CD8-positive, alpha-beta T cell (primary cell): ENCODE measurements at regions of chr10 and their contacts with region 1.

Region 1: GRCh38 chr10:23438550-23439441 is at the start of gene OTUD1:
- DNase-seq: peak; percentile 87 to 96 (median 93)
- ATAC-seq: peak; percentile 89
- H3K4me3 ChIP-seq: peak within 1 kb of the TSS; percentile 68 to 77
- H3K4me3 Mint-ChIP-seq: peak within 1 kb of the TSS; percentile 93
- H3K27ac ChIP-seq: peak within 1 kb of the TSS; percentile 82 to 90
- H3K27ac Mint-ChIP-seq: peak within 1 kb of the TSS; percentile 91
- H3K4me1 ChIP-seq: peaks cover 32% of the 10 kb centered on the region
- H3K4me1 Mint-ChIP-seq: peaks cover 37% of the 10 kb centered on the region
- H3K27me3 ChIP-seq: no peaks in the 10 kb centered on the region
- H3K27me3 Mint-ChIP-seq: no peaks in the 10 kb centered on the region
- CTCF ChIP-seq: no peak
- total RNA-seq, gene OTUD1: 78.9 to 81.3 TPM

Region 2: GRCh38 chr10:21525367-21526183 is 1913.2 kb before region 1 on chr10 and contains the start of gene SKIDA1:
- CTCF ChIA-PET with region 1: no interaction called
- POLR2A ChIA-PET with region 1: no interaction called
- intact Hi-C with region 1: loop called (anchors 5 to 10 kb)
- DNase-seq: peak; percentile 13 to 77 (median 53)
- ATAC-seq: peak; percentile 73
- H3K4me3 ChIP-seq: peak within 1 kb of the TSS; percentile 70 to 75
- H3K4me3 Mint-ChIP-seq: peak within 1 kb of the TSS; percentile 87
- H3K27ac ChIP-seq: peak within 1 kb of the TSS; percentile 31 to 70
- H3K27ac Mint-ChIP-seq: peak within 1 kb of the TSS; percentile 92
- H3K4me1 ChIP-seq: peaks cover 15% of the 10 kb centered on the region
- H3K4me1 Mint-ChIP-seq: peaks cover 25% of the 10 kb centered on the region
- H3K27me3 ChIP-seq: peaks cover 17 to 28% of the 10 kb centered on the region in 2 experiments
- H3K27me3 Mint-ChIP-seq: peaks cover 39% of the 10 kb centered on the region
- CTCF ChIP-seq: no peak
- total RNA-seq, gene SKIDA1: not detected

Region 3: DNA sequence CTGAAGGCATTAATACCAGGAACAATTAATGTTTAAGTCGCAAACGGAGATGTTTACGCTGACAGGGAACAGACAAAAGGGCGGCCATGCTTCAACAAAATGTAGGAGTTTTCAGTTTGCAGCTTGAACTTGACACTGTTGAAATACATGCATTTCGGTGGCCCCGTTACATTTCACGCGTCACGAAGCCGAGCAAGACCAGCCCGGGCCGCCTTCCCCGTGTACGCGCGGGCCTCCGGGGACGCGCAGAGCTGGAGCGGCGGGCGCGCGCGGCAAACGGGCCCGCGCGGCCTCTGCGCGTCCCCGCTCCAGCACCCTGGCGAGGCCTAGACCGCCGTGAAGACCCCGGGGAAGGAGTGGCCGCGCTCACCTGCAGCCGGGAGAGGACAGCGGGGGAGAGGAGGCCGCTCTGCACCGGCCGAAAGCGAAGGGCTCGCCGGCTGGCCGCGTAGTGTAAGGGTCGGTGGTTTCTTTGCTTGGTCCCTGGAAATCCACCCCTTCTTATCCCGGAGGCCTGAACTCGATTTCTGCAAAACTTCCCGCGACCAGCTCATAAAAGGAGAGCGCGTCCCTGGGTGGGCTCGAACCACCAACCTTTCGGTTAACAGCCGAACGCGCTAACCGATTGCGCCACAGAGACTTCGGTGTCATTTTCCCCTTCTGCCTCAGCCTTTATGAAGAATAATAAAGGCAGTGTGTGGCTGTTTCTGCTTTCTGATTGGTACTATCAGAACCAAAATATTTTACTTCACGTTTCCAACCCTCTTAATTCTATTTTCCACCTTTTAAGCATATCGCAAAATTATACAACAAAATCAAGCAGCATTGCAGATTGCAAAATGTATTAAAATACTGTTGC is 1209.6 kb before region 1 on chr10:
- CTCF ChIA-PET with region 1: no interaction called
- POLR2A ChIA-PET with region 1: interaction called, 3 read pairs
- intact Hi-C with region 1: loop called in 1 of 2 experiments (anchors 10 kb)
- DNase-seq: peak; percentile 66 to 92 (median 86)
- ATAC-seq: peak; percentile 76
- H3K4me3 ChIP-seq: peak overlapping the region; percentile 67 to 77
- H3K4me3 Mint-ChIP-seq: peak overlapping the region; percentile 82
- H3K27ac ChIP-seq: peak overlapping the region; percentile 60 to 63
- H3K27ac Mint-ChIP-seq: peak overlapping the region; percentile 98
- H3K4me1 ChIP-seq: peaks cover 8% of the 10 kb centered on the region
- H3K4me1 Mint-ChIP-seq: peaks cover 14% of the 10 kb centered on the region
- H3K27me3 ChIP-seq: peaks cover 0 to 3% of the 10 kb centered on the region in 2 experiments
- H3K27me3 Mint-ChIP-seq: no peaks in the 10 kb centered on the region
- CTCF ChIP-seq: no peak

Region 4: GRCh38 chr10:22900841-22901601 is 537.8 kb before region 1 on chr10:
- CTCF ChIA-PET with region 1: no interaction called
- POLR2A ChIA-PET with region 1: no interaction called
- intact Hi-C with region 1: loop called in 1 of 2 experiments (anchors 5 kb)
- DNase-seq: no peak
- ATAC-seq: no peak
- H3K4me3 ChIP-seq: no peak overlapping the region
- H3K4me3 Mint-ChIP-seq: no peak overlapping the region
- H3K27ac ChIP-seq: no peak overlapping the region
- H3K27ac Mint-ChIP-seq: no peak overlapping the region
- H3K4me1 ChIP-seq: no peaks in the 10 kb centered on the region
- H3K4me1 Mint-ChIP-seq: no peaks in the 10 kb centered on the region
- H3K27me3 ChIP-seq: no peaks in the 10 kb centered on the region
- H3K27me3 Mint-ChIP-seq: no peaks in the 10 kb centered on the region
- CTCF ChIP-seq: no peak

Region 5: DNA sequence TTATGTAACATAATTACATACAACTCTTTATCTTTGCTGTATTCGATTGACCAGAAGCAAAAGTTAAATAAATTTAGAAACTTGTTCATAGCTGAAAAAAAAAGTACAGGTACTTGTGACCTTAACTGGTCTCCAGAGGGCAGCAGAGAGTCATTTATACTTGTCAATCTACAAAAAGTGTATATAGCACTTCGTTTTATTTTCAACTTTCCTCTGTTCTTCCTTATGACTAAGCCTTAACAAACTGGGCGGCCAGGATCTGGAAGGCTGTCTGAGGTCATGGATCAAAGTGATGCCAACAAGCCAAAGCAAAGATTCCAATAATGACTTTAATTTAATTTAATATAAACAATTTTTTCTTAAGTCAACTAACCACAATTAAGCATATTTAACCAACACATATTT is 124.0 kb before region 1 on chr10:
- CTCF ChIA-PET with region 1: interaction called, 4 read pairs
- POLR2A ChIA-PET with region 1: no interaction called
- intact Hi-C with region 1: loop called in 1 of 2 experiments (anchors 10 kb)
- DNase-seq: peak in 7 of 9 experiments; percentile 26 to 78 (median 46)
- ATAC-seq: no peak
- H3K4me3 ChIP-seq: no peak overlapping the region
- H3K4me3 Mint-ChIP-seq: no peak overlapping the region
- H3K27ac ChIP-seq: no peak overlapping the region
- H3K27ac Mint-ChIP-seq: no peak overlapping the region
- H3K4me1 ChIP-seq: no peaks in the 10 kb centered on the region
- H3K4me1 Mint-ChIP-seq: no peaks in the 10 kb centered on the region
- H3K27me3 ChIP-seq: no peaks in the 10 kb centered on the region
- H3K27me3 Mint-ChIP-seq: peaks cover 3% of the 10 kb centered on the region
- CTCF ChIP-seq: peak; percentile 97

Region 6: GRCh38 chr10:23362879-23363792 is 75.7 kb before region 1 on chr10:
- CTCF ChIA-PET with region 1: no interaction called
- POLR2A ChIA-PET with region 1: interaction called, 4 read pairs
- intact Hi-C with region 1: loop called (anchors 2 kb)
- DNase-seq: peak in 5 of 9 experiments; percentile 26 to 80 (median 46)
- ATAC-seq: peak; percentile 86
- H3K4me3 ChIP-seq: peak overlapping the region; percentile 8 to 19
- H3K4me3 Mint-ChIP-seq: peak overlapping the region; percentile 73
- H3K27ac ChIP-seq: peak overlapping the region; percentile 39 to 67
- H3K27ac Mint-ChIP-seq: peak overlapping the region; percentile 92
- H3K4me1 ChIP-seq: peaks cover 40% of the 10 kb centered on the region
- H3K4me1 Mint-ChIP-seq: peaks cover 42% of the 10 kb centered on the region
- H3K27me3 ChIP-seq: no peaks in the 10 kb centered on the region
- H3K27me3 Mint-ChIP-seq: no peaks in the 10 kb centered on the region
- CTCF ChIP-seq: no peak

Region 7: GRCh38 chr10:23391821-23392220 is 47.0 kb before region 1 on chr10:
- CTCF ChIA-PET with region 1: no interaction called
- POLR2A ChIA-PET with region 1: no interaction called
- intact Hi-C with region 1: no loop called
- DNase-seq: no peak
- ATAC-seq: no peak
- H3K4me3 ChIP-seq: no peak overlapping the region
- H3K4me3 Mint-ChIP-seq: no peak overlapping the region
- H3K27ac ChIP-seq: no peak overlapping the region
- H3K27ac Mint-ChIP-seq: no peak overlapping the region
- H3K4me1 ChIP-seq: no peaks in the 10 kb centered on the region
- H3K4me1 Mint-ChIP-seq: no peaks in the 10 kb centered on the region
- H3K27me3 ChIP-seq: no peaks in the 10 kb centered on the region
- H3K27me3 Mint-ChIP-seq: peaks cover 5% of the 10 kb centered on the region
- CTCF ChIP-seq: no peak

Region 8: GRCh38 chr10:25016376-25017154 is 1577.8 kb after region 1 on chr10 and contains the start of gene THNSL1:
- CTCF ChIA-PET with region 1: no interaction called
- POLR2A ChIA-PET with region 1: no interaction called
- intact Hi-C with region 1: loop called in 1 of 2 experiments (anchors 5 kb)
- DNase-seq: peak; percentile 93 to 99 (median 98)
- ATAC-seq: peak; percentile 94
- H3K4me3 ChIP-seq: peak within 1 kb of the TSS; percentile 69 to 76
- H3K4me3 Mint-ChIP-seq: peak within 1 kb of the TSS; percentile 93
- H3K27ac ChIP-seq: peak within 1 kb of the TSS; percentile 82 to 91
- H3K27ac Mint-ChIP-seq: peak within 1 kb of the TSS; percentile 95
- H3K4me1 ChIP-seq: peaks cover 18% of the 10 kb centered on the region
- H3K4me1 Mint-ChIP-seq: peaks cover 35% of the 10 kb centered on the region
- H3K27me3 ChIP-seq: no peaks in the 10 kb centered on the region
- H3K27me3 Mint-ChIP-seq: no peaks in the 10 kb centered on the region
- CTCF ChIP-seq: no peak
- total RNA-seq, gene THNSL1: 0.53 to 0.71 TPM